ENCODE measurements at regions of chr6 and their contacts with region 1.

Region 1: DNA sequence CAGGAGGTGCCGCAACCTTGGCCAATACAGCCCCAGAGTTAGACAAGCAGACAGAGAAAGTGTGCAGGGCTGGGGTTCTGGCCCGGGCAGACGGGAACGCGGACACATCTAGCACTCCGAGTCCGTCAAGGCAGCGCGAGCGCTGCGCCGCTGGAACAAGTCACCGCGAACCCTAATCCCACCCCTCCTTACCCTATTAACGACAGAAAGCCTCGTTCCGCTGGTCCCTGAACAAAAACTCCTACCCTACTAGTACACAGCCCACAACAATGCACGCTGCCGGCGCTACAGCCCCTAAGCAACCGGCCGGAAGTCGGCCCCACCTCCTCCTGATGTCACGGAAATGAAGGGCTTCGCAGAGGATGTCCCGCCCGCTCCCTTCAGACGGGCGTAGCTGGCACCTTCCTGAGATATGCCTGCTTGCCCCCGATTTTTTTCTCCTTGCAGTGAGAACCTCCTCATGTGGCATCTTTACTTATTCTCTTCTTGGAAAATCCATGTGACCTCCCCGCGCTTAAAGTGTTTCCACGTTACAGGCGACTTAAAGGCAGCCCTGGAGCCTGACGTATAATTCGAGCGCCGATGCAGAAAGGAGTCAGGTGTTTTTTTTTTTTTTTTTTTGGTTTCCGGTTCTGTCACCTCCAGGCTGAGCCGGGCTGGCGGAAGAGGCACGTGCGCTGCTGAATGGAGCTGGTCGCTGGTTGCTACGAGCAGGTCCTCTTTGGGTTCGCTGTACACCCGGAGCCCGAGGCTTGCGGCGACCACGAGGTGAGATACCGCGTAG is at the starts of genes C6orf52 and PAK1IP1:
- DNase-seq: peak; percentile 98
- H3K4me3 ChIP-seq: peak within 1 kb of the TSS; percentile 58 to 91 (median 84)
- H3K27ac ChIP-seq: peak within 1 kb of the TSS; percentile 91 to 98 (median 95)
- H3K4me1 ChIP-seq: peaks cover 20 to 52% (median 29%) of the 10 kb centered on the region in 6 donors
- H3K27me3 ChIP-seq: no peaks in the 10 kb centered on the region
- CTCF ChIP-seq: peak in 1 of 11 experiments; percentile 14
- POLR2A ChIP-seq: peak in 1 of 3 donors; percentile 76
- total RNA-seq, gene C6orf52: 0.50 to 1.5 (median 1.1) TPM in 3 of 7 donors, not detected in the others
- total RNA-seq, gene PAK1IP1: 7.3 to 13.6 (median 10.8) TPM

Region 2: DNA sequence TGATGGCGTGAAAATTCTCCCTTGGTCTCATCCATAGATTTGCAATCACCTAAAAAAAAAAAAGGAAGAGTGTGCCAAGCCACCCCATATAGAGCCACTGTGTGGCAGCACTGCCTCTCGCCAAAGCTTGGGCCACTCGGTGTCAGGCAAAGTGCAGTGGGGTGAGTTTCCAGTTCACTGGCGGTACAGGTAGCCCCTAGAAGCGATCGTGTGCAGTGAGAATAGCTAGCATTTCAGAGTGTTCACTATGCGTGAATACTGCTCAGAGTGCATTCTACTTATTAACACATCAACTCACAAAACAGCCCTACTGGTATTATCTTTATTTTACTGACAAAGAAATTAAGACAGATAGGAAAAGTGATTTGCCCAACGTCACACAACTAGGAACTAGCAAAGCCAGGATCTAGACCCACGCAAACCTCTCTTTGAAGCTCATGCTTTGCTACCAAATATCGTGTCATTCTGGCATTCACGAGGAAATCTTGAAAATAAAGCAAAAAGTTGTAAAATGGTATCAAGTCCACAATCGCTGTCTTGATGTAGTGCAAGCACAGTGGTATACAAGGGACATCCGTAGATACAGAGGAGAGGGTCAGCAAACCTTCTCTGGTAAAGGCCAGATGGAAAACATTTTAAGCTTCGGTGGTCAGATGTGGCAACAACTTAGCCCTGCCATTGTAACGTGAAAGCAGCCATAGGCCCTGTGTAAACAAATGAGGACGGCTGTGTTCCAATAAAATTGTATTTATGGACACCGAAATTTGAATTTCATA is 183.7 kb before region 1 on chr6:
- intact Hi-C with region 1: loop called (anchors 10 kb)
- DNase-seq: peak; percentile 89
- H3K4me3 ChIP-seq: peak overlapping the region in 2 of 8 donors; percentile 12 to 40
- H3K27ac ChIP-seq: no peak overlapping the region
- H3K4me1 ChIP-seq: peaks cover 0 to 14% (median 6%) of the 10 kb centered on the region in 6 donors
- H3K27me3 ChIP-seq: no peaks in the 10 kb centered on the region
- CTCF ChIP-seq: peak; percentile 41 to 84 (median 70)
- POLR2A ChIP-seq: no peak

Region 3: DNA sequence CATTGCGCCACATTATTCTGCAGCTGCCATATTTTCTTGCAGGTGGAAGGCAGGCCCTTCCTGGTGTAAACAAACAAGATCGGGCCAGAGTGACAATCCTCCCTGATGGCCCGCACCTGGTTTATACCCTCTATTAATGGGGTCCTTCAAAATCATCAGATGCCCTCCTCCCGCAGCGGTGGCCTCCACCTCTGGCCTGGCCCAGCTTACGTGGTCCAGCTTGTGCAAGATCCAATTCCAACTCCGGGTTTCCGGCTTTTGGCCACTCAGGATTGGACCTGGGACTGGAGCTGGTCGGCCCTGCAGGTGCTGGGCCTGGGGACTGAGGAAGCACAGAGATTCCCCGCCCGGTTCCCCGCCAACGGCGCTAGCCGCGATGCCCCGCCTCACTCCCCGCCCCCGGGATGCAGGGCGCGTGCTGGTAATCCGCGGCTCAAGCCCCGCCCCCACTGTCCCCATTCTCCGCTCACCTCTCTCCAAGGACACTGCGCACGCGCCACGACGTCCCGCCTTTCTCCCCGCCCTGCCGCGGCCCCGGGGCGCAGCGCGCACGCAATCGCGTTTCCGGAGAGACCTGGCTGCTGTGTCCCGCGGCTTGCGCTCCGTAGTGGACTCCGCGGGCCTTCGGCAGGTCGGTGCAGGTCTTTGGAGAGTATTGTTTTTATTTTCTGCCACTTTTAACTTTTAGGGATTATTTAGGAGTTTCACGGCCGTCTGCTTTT is 52.9 kb after region 1 on chr6 and contains the start of gene TMEM14B:
- intact Hi-C with region 1: loop called (anchors 10 kb)
- DNase-seq: peak; percentile 100
- H3K4me3 ChIP-seq: peak within 1 kb of the TSS; percentile 50 to 82 (median 65)
- H3K27ac ChIP-seq: peak within 1 kb of the TSS; percentile 80 to 90 (median 88)
- H3K4me1 ChIP-seq: peaks cover 9 to 59% (median 37%) of the 10 kb centered on the region in 6 donors
- H3K27me3 ChIP-seq: no peaks in the 10 kb centered on the region
- CTCF ChIP-seq: peak in 3 of 11 experiments; percentile 22 to 39 (median 25)
- POLR2A ChIP-seq: peak in 1 of 3 donors; percentile 16
- total RNA-seq, gene TMEM14B: 49.7 to 63.0 (median 57.9) TPM

Region 4: GRCh38 chr6:10951675-10952282 is 257.3 kb after region 1 on chr6:
- intact Hi-C with region 1: no loop called
- DNase-seq: no peak
- H3K4me3 ChIP-seq: no peak overlapping the region
- H3K27ac ChIP-seq: no peak overlapping the region
- H3K4me1 ChIP-seq: no peaks in the 10 kb centered on the region
- H3K27me3 ChIP-seq: peaks cover 0 to 15% (median 0%) of the 10 kb centered on the region in 7 donors
- CTCF ChIP-seq: peak in 4 of 11 experiments; percentile 19 to 45 (median 28)
- POLR2A ChIP-seq: no peak